Vagina (tissue), 2 donors: ENCODE measurements at regions of chr14 and their contacts with region 1.

Region 1: GRCh38 chr14:24058260-24058950 is 6.6 kb downstream of the CARMIL3 start:
- DNase-seq: no peak
- H3K4me3 ChIP-seq: no peak overlapping the region
- H3K27ac ChIP-seq: no peak overlapping the region
- H3K4me1 ChIP-seq: no peaks in the 10 kb centered on the region
- H3K27me3 ChIP-seq: no peaks in the 10 kb centered on the region
- CTCF ChIP-seq: peak; percentile 84 to 92 (median 85)
- POLR2A ChIP-seq: no peak

Region 2: DNA sequence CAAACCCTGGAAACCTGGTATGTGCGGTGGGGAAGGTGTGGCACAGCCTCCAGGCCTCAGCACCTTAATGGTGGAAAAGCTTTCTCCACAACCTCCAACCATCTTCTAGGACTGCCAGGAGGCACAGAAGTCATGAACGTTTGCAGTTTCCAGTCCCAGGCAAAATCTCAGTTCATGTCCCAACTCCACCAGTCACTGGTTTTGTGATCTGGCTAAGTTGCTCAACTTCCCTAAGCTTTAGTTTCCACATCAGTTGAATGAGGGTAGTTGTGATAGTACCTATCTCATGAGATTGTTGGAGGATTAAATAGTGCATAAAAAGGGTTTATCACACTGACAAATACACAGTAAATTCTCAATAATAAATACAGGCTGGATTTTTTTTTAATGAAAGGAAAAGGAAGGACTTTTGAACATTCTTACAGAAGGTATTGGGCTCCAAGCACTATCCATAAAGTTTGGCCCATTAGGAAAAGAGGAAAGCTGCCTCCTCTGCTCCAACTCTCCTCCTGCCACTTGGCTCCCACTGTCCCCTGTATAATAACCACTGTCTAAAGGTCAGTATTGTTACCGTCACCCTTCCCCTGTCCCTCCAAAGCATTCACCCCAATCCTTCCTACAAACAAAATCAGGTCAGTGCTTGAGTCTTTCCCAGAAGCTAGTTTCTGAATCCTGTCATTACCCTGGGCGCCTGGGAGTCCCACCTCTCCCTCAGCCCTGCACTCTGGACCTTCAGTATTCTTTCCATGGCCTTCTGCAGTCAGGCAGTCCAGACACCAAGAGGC is 42.0 kb after region 1 on chr14:
- intact Hi-C with region 1: loop called (anchors 5 kb)
- DNase-seq: no peak
- H3K4me3 ChIP-seq: no peak overlapping the region
- H3K27ac ChIP-seq: no peak overlapping the region
- H3K4me1 ChIP-seq: peaks cover 6% of the 10 kb centered on the region
- H3K27me3 ChIP-seq: no peaks in the 10 kb centered on the region
- CTCF ChIP-seq: no peak
- POLR2A ChIP-seq: no peak

Region 3: GRCh38 chr14:24146978-24147760 is 88.8 kb after region 1 on chr14 and contains the start of gene RNF31:
- intact Hi-C with region 1: no loop called
- DNase-seq: peak in 1 of 2 donors; percentile 98
- H3K4me3 ChIP-seq: peak within 1 kb of the TSS; percentile 88 to 94
- H3K27ac ChIP-seq: peak within 1 kb of the TSS; percentile 87
- H3K4me1 ChIP-seq: peaks cover 35% of the 10 kb centered on the region
- H3K27me3 ChIP-seq: no peaks in the 10 kb centered on the region
- CTCF ChIP-seq: no peak
- POLR2A ChIP-seq: peak in 1 of 2 donors; percentile 59
- total RNA-seq, gene RNF31: 87.9 TPM